Mammary epithelial cell (primary cell): ENCODE measurements at regions of chr16 and their contacts with region 1.

Region 1: GRCh38 chr16:51762081-51762996 is 611.3 kb upstream of the SALL1 start:
- DNase-seq: peak; percentile 49
- H3K4me3 ChIP-seq: no peak overlapping the region
- H3K27ac ChIP-seq: no peak overlapping the region
- H3K4me1 ChIP-seq: no peaks in the 10 kb centered on the region
- H3K27me3 ChIP-seq: peaks cover 2% of the 10 kb centered on the region
- CTCF ChIP-seq: peak; percentile 80 to 94

Region 2: GRCh38 chr16:50806099-50807062 is 956.0 kb before region 1 on chr16:
- CTCF ChIA-PET with region 1: interaction called, 5 read pairs
- dilution Hi-C with region 1: no loop called
- in situ Hi-C with region 1: no loop called
- intact Hi-C with region 1: loop called (anchors 1 kb)
- DNase-seq: peak; percentile 79
- H3K4me3 ChIP-seq: peak overlapping the region; percentile 40 to 44 (median 43)
- H3K27ac ChIP-seq: no peak overlapping the region
- H3K4me1 ChIP-seq: no peaks in the 10 kb centered on the region
- H3K27me3 ChIP-seq: no peaks in the 10 kb centered on the region
- CTCF ChIP-seq: peak; percentile 81 to 86

Region 3: GRCh38 chr16:51062039-51062438 is 700.3 kb before region 1 on chr16:
- CTCF ChIA-PET with region 1: no interaction called
- dilution Hi-C with region 1: no loop called
- in situ Hi-C with region 1: no loop called
- intact Hi-C with region 1: loop called (anchors 1 kb)
- DNase-seq: no peak
- H3K4me3 ChIP-seq: no peak overlapping the region
- H3K27ac ChIP-seq: no peak overlapping the region
- H3K4me1 ChIP-seq: no peaks in the 10 kb centered on the region
- H3K27me3 ChIP-seq: peaks cover 3% of the 10 kb centered on the region
- CTCF ChIP-seq: no peak

Region 4: DNA sequence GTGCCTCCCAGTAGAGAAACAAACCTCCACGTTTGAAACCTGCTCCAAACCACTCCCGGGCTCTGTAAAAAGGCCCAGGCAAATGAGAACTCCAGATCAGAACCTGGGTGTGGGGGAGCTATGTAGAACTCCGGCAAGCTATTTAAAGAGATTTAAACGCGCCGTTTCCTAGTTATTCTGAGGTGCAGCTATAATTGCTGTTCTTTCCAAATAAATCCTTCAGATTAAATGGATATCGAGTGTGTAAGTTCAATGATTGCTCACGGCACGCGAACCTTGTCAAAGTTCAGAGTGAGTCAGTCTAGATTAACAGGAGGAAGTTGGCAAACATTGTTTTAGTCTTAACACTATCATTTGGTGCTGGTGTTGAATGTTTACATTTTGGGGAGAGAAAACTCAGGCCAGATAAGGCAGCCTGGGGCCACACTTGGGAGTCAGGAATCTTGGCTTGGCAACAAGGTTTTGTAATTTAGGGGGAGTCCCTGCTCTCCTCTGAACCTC is 518.4 kb before region 1 on chr16:
- CTCF ChIA-PET with region 1: no interaction called
- dilution Hi-C with region 1: no loop called
- in situ Hi-C with region 1: no loop called
- intact Hi-C with region 1: loop called (anchors 5 kb)
- DNase-seq: peak; percentile 8
- H3K4me3 ChIP-seq: no peak overlapping the region
- H3K27ac ChIP-seq: no peak overlapping the region
- H3K4me1 ChIP-seq: no peaks in the 10 kb centered on the region
- H3K27me3 ChIP-seq: no peaks in the 10 kb centered on the region
- CTCF ChIP-seq: no peak

Region 5: DNA sequence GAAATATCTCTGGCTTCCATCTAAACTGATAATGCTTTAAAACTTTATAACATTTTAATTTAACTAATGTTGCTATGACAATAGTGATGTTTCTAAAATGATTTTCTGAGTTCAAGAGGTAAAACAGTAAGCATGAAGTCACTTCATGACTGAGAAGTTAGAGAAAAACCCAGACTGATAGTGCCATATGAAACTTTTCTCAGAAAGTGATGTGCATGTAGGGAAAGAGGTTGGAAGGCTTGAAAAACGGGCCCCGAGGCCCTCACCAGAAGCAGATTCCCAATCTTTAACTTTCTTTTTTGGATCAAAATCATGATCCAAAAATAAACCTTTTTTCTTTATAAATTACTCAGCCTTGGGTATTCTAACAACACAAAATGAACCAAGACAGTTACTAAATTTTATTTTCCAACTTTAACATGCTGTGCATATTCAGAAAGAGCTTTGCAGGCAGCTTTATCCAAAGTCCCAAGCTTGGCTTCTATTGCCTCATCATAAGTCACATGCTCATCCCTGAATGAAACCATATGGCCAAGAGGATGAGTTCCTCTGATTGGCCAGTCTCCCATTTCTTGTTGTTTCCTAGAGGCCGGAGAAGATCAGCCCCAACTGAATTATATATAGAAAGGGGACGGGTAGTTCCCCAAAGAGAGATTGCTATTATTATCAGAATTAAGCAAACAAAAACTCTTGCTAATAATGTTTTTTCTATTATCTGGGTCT is 253.7 kb before region 1 on chr16:
- CTCF ChIA-PET with region 1: no interaction called
- dilution Hi-C with region 1: no loop called
- in situ Hi-C with region 1: no loop called
- intact Hi-C with region 1: loop called (anchors 1 kb)
- DNase-seq: no peak
- H3K4me3 ChIP-seq: no peak overlapping the region
- H3K27ac ChIP-seq: no peak overlapping the region
- H3K4me1 ChIP-seq: no peaks in the 10 kb centered on the region
- H3K27me3 ChIP-seq: no peaks in the 10 kb centered on the region
- CTCF ChIP-seq: no peak